ENCODE measurements at regions of chr5 and their contacts with region 1.

Region 1: DNA sequence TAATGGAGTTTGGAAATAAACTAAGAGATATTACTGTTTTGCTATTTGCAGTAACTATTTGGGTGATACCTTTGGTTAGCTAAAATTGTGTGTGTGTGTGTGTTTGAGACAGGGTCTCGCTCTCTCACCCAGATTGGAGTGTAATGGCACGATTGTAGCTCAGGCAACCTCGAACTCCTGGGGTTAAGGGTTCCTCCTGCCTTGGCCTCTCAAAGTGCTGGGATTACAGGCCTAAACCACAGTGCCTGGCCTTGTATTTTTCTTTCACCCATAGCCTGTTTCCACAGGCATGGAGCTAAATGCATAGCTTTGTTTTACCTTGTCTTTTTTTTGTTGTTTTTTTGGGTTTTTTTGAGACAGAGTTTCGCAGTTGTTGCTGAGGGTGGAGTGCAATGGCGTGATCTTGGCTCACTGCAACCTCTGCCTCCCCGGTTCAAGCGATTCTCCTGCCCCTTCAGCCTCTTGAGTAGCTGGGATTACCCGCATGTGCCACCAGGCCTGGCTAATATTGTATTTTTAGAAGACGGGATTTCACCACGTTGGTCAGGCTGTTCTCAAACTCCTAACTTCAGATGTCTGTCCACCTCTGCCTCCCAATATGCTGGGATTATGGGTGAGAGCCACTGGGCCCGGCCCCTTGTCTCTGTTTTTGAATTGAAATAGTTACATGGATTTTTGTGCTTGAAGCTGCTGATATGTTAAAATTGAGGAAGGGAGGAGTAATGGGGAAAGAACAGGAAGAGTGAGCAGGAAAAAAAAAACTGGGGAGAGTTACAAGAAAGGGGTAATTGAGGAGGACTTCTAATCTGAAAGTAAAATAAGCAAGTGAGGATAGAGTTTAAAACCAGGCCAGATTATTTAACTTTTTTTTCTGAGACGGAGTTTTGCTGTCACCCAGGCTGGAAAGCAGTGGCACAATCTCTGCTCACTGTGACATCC is 5.7 kb downstream of the GPBP1 start:
- DNase-seq: no peak
- H3K4me3 Mint-ChIP-seq: peak overlapping the region; percentile 100
- H3K27ac Mint-ChIP-seq: peak overlapping the region; percentile 39
- H3K4me1 Mint-ChIP-seq: peaks cover 16% of the 10 kb centered on the region
- H3K27me3 Mint-ChIP-seq: no peaks in the 10 kb centered on the region
- CTCF ChIP-seq: no peak

Region 2: DNA sequence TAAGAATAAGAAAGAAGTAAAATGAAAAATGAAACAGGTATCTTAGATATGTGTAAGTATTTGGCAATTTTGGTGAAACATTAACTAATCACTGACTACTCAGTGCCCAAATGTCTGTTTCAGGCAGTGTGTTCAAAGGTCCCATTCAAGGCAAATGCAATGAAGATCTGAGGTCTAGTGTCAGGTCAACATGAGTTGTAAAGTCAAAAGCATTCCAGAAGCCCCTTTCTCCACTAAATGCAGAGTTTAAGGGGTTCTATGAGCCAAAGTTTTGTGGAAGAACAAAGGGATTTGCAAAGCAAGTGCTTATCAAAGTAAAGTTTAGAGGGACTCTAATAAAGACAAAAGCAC is 76.7 kb before region 1 on chr5:
- CTCF ChIA-PET with region 1: no interaction called
- intact Hi-C with region 1: no loop called
- DNase-seq: no peak
- H3K4me3 Mint-ChIP-seq: peak overlapping the region; percentile 22
- H3K27ac Mint-ChIP-seq: no peak overlapping the region
- H3K4me1 Mint-ChIP-seq: peaks cover 36% of the 10 kb centered on the region
- H3K27me3 Mint-ChIP-seq: no peaks in the 10 kb centered on the region
- CTCF ChIP-seq: no peak

Region 3: DNA sequence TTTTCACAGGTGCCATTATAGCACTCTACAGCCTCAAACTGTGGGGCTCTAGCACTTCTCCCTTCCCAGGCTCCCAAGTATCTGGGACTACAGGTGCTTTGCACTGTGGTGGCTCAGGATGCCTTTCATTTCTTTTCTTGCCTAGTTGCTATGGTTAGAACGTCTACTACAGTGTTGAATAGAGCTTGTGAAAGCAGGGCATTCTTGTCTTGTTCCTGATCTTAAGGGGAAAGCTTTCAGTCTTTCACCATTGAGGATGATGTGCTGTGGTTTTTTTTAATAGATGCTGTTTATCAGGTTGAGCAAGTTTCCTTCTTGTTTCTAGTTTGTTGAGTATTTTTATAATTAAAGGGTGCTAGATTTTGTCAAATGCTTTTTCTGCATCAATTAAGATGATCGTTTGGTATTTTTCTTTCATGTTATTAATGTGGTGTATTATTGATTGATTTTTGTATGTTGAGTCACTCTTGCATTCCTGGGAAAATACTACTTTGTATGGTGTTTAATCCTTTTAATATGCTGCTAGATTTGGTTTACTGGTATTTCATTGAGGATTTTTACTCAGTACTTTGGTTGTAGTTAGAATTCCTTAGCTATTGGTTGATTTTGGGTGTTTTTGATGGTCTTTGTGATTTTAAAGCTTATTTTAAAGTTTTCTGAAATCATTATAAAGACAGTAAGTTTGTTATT is 30.0 kb after region 1 on chr5:
- CTCF ChIA-PET with region 1: no interaction called
- intact Hi-C with region 1: loop called (anchors 2 kb)
- DNase-seq: peak; percentile 12
- H3K4me3 Mint-ChIP-seq: peak overlapping the region; percentile 50
- H3K27ac Mint-ChIP-seq: peak overlapping the region; percentile 89
- H3K4me1 Mint-ChIP-seq: peaks cover 30% of the 10 kb centered on the region
- H3K27me3 Mint-ChIP-seq: no peaks in the 10 kb centered on the region
- CTCF ChIP-seq: no peak